Astrocyte of the cerebellum (primary cell): ENCODE measurements at regions of chr7 and their contacts with region 1.

Region 1: DNA sequence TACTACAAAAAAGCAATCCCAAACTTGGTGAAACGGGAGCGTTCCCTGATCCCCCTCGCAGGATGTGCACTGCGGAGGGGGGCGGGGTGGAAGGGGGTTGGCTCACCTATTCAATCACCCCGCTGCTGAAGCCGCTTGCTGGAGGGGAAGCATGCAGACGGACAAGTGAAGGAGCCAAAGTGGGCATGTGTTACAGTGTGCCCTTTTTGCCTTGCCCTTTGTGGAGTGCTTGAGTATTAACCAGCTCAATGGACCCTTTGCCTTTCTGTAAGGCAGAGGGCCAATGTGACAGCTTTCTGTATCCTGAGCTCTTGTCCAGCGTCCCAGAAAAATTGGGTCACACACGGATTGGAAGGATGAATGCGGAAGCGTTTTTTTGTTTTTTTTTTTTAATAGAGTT is 348.9 kb upstream of the NPSR1 start:
- DNase-seq: no peak
- H3K4me3 ChIP-seq: no peak overlapping the region
- CTCF ChIP-seq: no peak

Region 2: DNA sequence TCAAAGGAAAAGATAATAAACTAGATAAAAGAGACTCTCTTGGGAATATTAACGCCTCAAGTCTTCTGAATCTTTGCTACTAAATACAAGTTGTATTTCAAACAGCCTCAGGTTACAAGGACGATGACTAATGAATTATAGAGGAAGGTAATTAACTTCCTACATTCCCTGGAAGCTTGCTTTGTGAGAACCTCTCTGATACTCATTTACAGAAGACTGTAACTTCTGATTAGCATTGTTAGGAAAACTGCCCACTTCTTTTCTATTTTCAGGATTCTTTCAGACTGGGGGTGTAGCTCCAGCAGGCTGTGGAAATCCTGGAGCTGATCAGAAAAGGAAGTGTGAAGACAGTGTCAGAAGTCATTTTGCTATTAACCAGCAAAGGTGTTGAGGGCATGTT is 32.2 kb after region 1 on chr7:
- in situ Hi-C with region 1: loop called (anchors 5 kb)
- DNase-seq: no peak
- H3K4me3 ChIP-seq: no peak overlapping the region
- CTCF ChIP-seq: no peak

Region 3: DNA sequence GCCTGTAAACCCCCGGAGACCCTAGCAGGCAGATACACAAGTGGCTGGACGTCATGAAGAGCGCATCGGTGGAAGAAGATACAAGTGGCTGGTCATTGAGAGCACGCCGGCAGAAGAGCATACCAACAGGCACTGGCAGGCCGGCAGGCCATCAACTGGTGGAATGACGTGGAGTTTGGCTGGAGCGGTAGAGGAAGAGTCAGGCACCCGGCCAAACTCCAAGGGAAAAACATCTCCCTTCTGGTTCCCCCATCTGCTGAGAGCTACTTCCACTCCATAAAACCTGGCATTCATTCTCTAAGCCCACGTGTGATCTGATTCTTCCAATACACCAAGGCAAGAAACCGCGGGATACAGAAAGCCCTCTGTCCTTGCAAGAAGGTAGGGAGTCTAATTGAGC is 235.5 kb after region 1 on chr7:
- in situ Hi-C with region 1: no loop called
- DNase-seq: no peak
- H3K4me3 ChIP-seq: no peak overlapping the region
- CTCF ChIP-seq: no peak